Calu3 (cell line): ENCODE measurements at regions of chr5 and their contacts with region 1.

Region 1: DNA sequence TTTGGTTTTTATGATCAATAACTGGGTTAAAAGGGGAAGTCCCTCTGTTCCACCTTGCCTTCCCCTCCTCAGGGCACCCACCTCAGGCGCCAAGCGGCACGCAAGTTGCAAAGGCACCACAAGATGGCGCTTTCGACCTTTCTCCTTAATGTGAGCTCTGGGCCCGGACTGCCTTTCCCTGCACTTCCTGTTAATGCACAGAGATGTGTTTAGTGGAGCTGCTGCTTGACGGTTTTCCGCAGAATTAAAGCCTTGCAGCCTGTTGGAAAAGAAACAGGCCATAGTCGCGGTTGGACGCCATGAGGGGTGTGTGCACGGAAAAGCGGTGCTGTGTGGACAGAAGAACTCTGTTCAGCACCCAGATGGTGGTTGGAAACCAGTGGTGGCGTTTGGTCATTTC is 17.9 kb downstream of the CXCL14 start:
- DNase-seq: peak; percentile 91
- H3K4me3 Mint-ChIP-seq: no peak overlapping the region
- H3K27ac Mint-ChIP-seq: no peak overlapping the region
- H3K4me1 Mint-ChIP-seq: peaks cover 8% of the 10 kb centered on the region
- H3K27me3 Mint-ChIP-seq: peaks cover 60% of the 10 kb centered on the region
- CTCF ChIP-seq: peak; percentile 73

Region 2: GRCh38 chr5:135829681-135830383 is 269.0 kb after region 1 on chr5:
- CTCF ChIA-PET with region 1: interaction called, 31 read pairs
- intact Hi-C with region 1: loop called (anchors 1 kb)
- DNase-seq: peak; percentile 75
- H3K4me3 Mint-ChIP-seq: no peak overlapping the region
- H3K27ac Mint-ChIP-seq: no peak overlapping the region
- H3K4me1 Mint-ChIP-seq: no peaks in the 10 kb centered on the region
- H3K27me3 Mint-ChIP-seq: peaks cover 92% of the 10 kb centered on the region
- CTCF ChIP-seq: peak; percentile 94

Region 3: GRCh38 chr5:135881244-135881643 is 320.4 kb after region 1 on chr5:
- CTCF ChIA-PET with region 1: no interaction called
- intact Hi-C with region 1: no loop called
- DNase-seq: no peak
- H3K4me3 Mint-ChIP-seq: no peak overlapping the region
- H3K27ac Mint-ChIP-seq: no peak overlapping the region
- H3K4me1 Mint-ChIP-seq: peaks cover 10% of the 10 kb centered on the region
- H3K27me3 Mint-ChIP-seq: peaks cover 100% of the 10 kb centered on the region
- CTCF ChIP-seq: no peak